Cardiac septum (tissue), 1 donor: ENCODE measurements at regions of chr2 and their contacts with region 1.

Region 1: DNA sequence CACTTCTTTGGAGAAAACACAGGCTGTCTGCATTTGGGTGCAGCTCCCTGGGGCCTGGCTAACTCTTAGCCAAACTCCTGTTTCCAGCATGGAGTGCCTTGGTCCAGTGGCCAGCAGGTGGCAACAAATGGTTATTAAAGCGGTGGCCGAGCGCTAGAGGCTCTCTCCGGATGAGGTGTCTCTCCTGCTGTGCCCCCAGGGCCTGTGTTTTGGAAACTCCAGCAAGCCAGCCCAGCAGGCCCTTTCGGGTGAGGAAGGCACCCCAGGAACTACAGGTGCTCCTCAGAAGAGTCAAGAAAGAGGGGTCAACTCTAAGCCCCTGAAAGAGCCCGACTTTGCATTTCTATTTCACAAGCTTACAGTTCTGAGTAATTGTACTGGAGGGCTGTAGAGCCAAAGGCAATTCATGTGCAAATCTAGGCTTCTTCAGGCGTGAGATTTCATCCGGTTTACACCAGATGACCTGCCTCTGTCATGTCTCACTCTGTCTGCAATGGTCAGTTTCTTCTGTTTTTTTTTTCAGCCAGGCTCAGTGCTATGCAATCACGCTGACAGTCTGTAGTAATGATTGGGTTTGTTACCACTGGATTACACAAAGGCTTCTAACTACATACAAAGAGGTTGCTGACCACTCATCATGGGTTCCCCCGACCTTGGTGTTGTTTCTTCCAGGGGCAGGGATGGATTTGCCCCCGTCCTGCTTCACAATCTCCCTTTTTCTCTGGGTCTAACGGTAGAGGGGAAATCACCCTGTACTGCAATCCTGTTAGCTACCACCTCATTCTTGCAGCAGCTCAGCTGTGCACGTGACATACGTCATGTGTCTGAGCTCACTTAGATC is 7.6 kb upstream of the CHRNA1 start:
- DNase-seq: peak; percentile 84

Region 2: DNA sequence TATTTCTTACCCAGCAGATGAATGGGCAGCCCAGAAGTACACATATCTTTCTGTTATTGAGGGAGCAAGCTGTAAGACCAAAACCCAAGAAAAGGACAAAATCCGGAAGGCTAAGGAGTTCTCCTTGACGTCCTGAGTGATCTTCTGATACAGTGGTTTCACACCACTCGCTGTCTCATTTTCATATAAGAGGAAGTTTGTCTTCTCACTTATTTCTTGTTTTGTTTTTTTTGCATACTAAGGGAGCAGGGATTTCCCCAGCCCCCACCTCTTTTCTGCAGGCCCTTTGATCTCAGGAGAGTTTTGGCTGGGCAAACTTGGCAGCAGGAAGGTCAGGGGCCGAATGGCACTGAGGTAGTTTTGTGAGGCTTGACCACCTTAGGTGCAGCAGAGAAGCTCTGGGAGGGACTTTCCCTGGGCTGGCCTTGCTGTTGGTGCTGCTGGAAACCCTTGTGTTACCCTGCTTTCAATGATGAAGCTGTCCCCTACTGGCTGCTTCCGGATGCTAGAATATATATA is 20.9 kb before region 1 on chr2:
- intact Hi-C with region 1: loop called (anchors 2 kb)
- DNase-seq: no peak

Region 3: GRCh38 chr2:174985630-174986029 is 213.8 kb after region 1 on chr2:
- intact Hi-C with region 1: loop called (anchors 1 kb)
- DNase-seq: no peak

Region 4: GRCh38 chr2:175103191-175103590 is 331.3 kb after region 1 on chr2:
- intact Hi-C with region 1: loop called (anchors 10 kb)
- DNase-seq: no peak